ENCODE measurements at regions of chr19 and their contacts with region 1.

Region 1: DNA sequence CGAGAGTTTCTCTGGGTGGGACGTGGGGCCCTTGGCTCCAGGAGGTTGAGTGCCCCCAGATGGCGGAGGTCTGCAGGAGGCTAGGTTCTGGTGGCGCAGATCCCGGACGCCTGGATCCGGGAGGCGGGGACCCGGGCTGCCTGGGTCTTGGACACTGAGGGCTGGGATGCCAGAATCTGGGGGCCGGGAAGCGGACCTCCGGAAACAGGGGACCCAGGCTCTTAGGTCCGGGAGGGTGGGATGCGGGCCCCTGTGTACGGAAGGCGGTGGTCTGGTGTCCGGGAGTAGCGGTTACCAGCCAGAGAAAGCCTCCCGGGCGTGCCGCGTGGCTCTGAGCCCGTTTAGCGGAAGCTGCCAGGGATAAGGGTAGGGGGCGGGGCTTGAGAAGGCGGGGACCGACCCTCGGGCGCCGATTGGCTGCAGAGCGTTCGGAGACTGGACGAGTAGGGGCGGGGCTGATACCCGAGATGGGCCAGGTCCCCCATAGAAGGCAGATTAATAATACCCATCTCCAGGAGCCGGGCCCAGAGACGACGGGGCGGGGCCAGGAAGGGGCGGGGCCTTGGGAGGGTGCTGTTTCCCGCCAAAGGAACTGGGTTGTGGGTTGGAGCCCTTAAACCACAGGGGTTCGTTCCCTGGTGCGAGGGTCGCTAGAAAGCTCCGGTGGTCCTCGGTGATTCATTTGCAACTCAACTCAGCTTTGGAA is at the start of gene SLC1A5:
- DNase-seq: peak; percentile 99
- H3K4me3 Mint-ChIP-seq: peak within 1 kb of the TSS; percentile 96
- H3K27ac Mint-ChIP-seq: peak within 1 kb of the TSS; percentile 93
- H3K4me1 Mint-ChIP-seq: peaks cover 67% of the 10 kb centered on the region
- H3K27me3 Mint-ChIP-seq: peaks cover 11% of the 10 kb centered on the region

Region 2: DNA sequence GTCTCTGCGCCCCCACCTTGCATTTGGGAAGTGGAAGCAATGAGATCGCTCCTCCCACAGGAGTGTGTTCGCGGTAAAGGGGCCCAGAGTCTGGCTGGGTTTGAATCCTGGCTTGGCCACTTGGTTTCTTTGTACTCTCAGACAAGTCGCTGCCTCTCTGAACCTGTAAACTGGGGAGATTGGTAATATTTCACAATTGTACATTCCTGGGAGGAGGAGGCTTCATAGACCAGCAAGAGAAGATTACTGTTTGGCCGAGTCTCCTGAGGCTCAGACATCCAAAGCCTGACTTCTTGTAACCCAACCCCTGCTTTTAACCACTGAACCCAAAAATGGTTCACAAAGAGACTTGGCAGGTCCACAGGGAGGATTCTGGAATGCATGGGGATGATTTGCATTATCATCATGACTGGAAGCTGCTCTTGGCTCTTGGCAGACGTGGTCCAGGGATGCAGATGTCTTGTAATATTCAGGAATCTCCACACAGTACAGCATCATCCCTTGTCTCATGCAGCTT is 28.5 kb before region 1 on chr19:
- CTCF ChIA-PET with region 1: interaction called, 13 read pairs
- DNase-seq: no peak
- H3K4me3 Mint-ChIP-seq: no peak overlapping the region
- H3K27ac Mint-ChIP-seq: no peak overlapping the region
- H3K4me1 Mint-ChIP-seq: peaks cover 3% of the 10 kb centered on the region
- H3K27me3 Mint-ChIP-seq: no peaks in the 10 kb centered on the region

Region 3: DNA sequence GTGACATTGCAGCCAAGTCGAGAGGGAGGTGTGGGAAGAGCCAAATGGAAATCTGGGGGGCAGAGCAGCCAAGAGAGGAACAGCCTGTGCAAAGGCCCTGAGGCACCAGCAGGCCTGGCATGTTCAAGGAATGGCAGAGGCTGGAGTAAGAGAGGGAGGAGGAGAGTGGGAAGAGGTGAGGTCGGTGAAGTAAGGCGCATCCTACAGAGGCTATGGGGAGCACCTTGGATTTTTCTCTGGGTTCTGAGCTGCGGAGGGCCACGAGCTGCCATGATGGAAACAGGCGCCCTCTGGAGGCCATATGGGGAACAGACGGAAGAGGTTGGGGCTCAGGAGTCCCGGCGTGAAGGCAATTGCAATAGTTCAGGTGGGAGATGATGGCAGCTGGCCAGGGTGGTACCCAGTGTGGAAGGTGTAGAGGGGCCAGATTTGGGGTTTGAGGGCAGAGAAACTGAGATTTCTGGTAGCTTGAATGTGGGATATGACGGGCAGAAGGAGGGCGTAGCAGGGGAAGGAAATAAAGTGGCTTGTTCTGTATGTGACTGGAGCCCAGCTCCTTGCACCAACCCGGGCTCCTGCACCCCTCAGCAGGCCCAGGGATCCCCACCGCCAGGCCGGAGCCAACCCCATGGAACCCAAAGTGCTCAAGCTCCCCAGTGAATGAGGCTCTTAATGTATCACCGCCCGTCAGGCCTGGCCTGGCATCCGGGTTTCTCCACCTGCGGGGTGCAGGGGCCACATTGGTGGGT is 21.7 kb before region 1 on chr19:
- CTCF ChIA-PET with region 1: interaction called, 13 read pairs
- DNase-seq: peak; percentile 76
- H3K4me3 Mint-ChIP-seq: no peak overlapping the region
- H3K27ac Mint-ChIP-seq: no peak overlapping the region
- H3K4me1 Mint-ChIP-seq: peaks cover 5% of the 10 kb centered on the region
- H3K27me3 Mint-ChIP-seq: peaks cover 4% of the 10 kb centered on the region

Region 4: GRCh38 chr19:46803555-46803954 is 15.1 kb after region 1 on chr19:
- CTCF ChIA-PET with region 1: no interaction called
- DNase-seq: no peak
- H3K4me3 Mint-ChIP-seq: no peak overlapping the region
- H3K27ac Mint-ChIP-seq: no peak overlapping the region
- H3K4me1 Mint-ChIP-seq: no peaks in the 10 kb centered on the region
- H3K27me3 Mint-ChIP-seq: peaks cover 8% of the 10 kb centered on the region

Region 5: DNA sequence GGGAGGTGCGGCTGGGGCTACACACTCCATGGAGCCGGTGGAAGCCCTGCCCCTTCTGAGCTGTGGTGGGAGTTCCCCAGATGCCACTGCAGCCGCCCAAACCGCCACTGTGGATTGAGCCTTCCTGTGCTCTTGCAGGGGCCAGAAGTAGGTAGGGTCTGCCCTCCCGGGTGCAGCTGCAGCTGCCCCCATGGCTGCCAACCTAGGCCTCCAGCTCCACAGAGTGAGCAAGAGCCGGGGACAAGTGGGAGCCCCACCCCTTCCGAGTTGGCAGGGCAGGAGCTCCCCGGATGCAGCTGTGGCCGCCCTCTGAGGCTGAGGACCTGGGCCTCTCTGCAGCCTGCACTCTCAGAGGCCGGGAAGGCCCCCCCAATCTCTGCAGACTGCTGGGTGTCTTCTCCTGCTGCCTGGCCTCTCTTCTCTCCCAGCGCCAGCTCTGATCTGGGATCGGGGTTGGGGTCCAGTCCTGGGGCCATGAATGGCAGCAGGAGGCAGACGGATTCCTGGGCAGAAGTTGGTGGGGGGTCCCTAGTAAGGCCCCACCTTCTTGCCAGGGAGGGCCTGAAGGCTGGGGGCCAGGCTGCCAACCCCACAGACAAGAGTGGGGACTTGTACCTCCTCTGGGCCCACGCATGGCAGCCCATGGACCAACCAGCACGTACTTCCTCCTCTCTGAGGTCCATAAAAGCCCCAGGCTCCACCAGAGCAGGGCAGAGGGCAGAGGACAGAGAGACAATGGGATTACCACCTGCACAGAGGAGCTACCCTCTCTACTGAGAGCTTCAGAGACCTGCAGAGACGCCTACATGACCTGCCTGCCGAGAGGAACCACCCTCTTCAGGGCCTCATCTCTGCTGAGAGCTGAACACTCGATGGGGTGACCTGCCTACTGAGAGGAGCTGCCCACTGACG is 33.3 kb after region 1 on chr19:
- CTCF ChIA-PET with region 1: interaction called, 12 read pairs
- DNase-seq: peak; percentile 78
- H3K4me3 Mint-ChIP-seq: peak overlapping the region; percentile 54
- H3K27ac Mint-ChIP-seq: peak overlapping the region; percentile 90
- H3K4me1 Mint-ChIP-seq: peaks cover 53% of the 10 kb centered on the region
- H3K27me3 Mint-ChIP-seq: peaks cover 10% of the 10 kb centered on the region

Region 6: DNA sequence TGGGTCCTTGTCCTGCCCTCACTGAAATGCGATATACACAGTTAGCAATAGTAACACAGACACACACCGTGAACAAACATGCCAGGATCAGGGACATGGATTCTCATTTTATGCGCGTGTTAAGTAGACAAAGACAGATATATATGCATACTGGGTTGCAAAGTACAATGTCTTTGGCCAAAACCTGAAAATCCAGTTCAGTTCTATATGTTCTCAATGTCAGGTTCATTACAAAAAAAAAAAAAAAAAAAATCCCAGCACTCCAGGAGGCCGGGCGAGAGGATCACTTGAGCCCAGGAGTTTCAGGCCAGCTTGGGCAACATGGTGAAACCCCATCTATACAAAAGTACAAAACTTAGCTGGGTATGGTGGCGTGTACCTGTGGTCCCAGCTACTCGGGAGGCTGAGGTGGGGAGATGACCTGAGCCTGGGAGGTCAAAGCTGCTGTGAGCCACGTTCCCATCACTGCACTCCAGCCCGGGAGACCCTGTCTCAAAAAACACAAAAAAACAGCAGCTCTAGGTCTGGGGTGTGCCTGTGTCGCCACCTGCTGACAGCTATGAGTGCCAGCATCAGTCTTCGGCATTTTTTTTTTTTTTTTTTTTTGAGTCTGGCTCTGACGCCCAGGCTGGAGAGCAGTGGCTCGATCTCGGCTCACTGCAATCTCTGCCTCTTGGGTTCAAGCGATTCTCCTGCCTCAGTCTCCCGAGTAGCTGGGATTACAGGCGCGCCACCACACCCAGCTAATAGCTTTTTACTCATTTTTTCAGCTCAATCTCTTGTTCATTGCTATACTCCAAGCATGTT is 51.9 kb after region 1 on chr19:
- CTCF ChIA-PET with region 1: interaction called, 16 read pairs
- DNase-seq: peak; percentile 73
- H3K4me3 Mint-ChIP-seq: no peak overlapping the region
- H3K27ac Mint-ChIP-seq: peak overlapping the region; percentile 14
- H3K4me1 Mint-ChIP-seq: peaks cover 4% of the 10 kb centered on the region
- H3K27me3 Mint-ChIP-seq: no peaks in the 10 kb centered on the region

Measured in activated naive CD4-positive, alpha-beta T cell treated with anti-CD3 and anti-CD28 coated beads, Interleukin-2, amount 10 ng/mL, durations not matched to agents 7 days and 5 days (primary cell).